ENCODE measurements at regions of chr11 and their contacts with region 1.

Region 1: GRCh38 chr11:60913793-60914632 is at the start of gene TMEM109:
- DNase-seq: peak; percentile 92
- H3K4me3 Mint-ChIP-seq: peak within 1 kb of the TSS; percentile 92
- H3K27ac Mint-ChIP-seq: peak within 1 kb of the TSS; percentile 91
- H3K4me1 Mint-ChIP-seq: peaks cover 56% of the 10 kb centered on the region
- H3K27me3 Mint-ChIP-seq: no peaks in the 10 kb centered on the region
- total RNA-seq, gene TMEM109: 101 to 106 TPM

Region 2: GRCh38 chr11:60924110-60924905 is 10.3 kb after region 1 on chr11 and contains the start of gene TMEM132A:
- CTCF ChIA-PET with region 1: interaction called, 6 read pairs
- POLR2A ChIA-PET with region 1: no interaction called
- intact Hi-C with region 1: loop called (anchors 1 kb)
- DNase-seq: no peak
- H3K4me3 Mint-ChIP-seq: peak within 1 kb of the TSS; percentile 46
- H3K27ac Mint-ChIP-seq: no peak within 1 kb of the TSS
- H3K4me1 Mint-ChIP-seq: peaks cover 22% of the 10 kb centered on the region
- H3K27me3 Mint-ChIP-seq: peaks cover 23% of the 10 kb centered on the region
- total RNA-seq, gene TMEM132A: 3.3 to 5.7 TPM

Region 3: DNA sequence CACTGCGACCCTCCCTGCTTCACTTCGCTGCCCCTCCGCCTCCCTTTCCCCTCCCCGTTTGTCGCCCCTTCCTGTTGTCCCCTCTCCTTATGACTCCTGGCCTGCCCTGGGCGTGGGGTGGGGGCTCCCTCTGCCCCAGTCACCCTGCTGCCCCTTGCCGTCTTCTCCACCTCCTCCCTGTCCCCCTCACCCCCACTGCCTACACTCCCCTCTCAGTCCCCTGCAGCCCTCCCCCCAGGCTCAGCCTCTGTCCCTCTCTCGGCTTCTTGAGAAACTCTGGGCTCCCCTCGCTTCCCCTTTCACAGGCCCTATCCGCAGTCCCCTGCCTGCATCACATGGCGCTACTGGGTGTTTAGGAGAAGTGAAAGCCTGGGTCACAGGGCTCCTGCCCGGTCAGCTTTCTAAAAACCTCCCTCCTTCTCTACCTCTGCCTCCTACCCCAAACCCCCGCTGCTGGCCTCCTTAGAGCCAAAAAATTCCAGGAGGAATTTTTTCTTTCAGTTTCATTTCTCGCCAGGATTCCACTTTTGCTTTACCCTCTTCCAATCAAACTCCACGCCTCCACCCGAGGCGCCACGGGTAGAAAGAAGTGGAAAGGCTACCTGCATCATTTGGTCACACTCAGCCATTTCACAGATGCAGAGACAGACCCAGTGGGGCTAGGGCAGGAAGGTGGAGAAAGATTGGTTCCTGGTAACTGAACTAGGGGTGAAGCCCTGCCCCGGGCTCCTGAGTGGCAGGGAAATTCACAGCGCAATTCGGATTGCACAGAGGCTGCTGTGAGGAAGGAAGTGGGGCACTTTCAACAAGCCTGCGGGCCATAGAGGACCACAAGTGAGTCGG is 38.1 kb after region 1 on chr11 and contains the start of gene SLC15A3:
- CTCF ChIA-PET with region 1: interaction called, 3 read pairs
- POLR2A ChIA-PET with region 1: no interaction called
- intact Hi-C with region 1: loop called (anchors 5 kb)
- DNase-seq: peak; percentile 44
- H3K4me3 Mint-ChIP-seq: peak within 1 kb of the TSS; percentile 48
- H3K27ac Mint-ChIP-seq: no peak within 1 kb of the TSS
- H3K4me1 Mint-ChIP-seq: peaks cover 14% of the 10 kb centered on the region
- H3K27me3 Mint-ChIP-seq: peaks cover 25% of the 10 kb centered on the region
- total RNA-seq, gene SLC15A3: 1.3 to 1.8 TPM

Measured in activated CD4-positive, alpha-beta memory T cell treated with anti-CD3 and anti-CD28 coated beads for 36 hours (primary cell).